Spleen (tissue), 13 donors: ENCODE measurements at regions of chr5 and their contacts with region 1.

Region 1: DNA sequence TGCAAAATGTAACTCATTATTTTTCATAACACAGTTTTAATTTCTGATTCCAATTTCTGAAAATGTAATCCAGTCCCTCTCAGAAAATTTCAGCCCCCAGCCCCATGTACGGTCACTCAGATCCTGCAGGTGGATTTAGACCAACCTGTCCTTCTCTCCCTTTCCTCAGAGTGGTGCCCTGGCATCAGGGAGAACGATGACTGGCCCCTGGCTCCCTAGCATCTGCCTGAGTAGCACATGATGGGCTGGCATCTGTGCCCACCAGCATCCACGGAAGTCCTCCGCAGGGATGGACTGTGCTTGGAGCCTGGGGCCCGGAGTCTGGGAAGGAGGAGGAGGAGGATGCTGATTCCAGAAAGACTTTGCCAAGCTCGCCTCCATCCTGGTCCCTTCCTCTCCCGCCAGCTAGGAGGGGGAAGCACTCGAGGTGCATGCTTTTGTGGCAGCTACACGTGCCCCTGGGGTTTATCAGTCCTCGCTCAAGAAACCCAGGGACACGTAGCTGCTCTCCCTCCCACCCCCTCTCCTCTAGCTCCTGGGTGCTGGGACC is 54.4 kb upstream of the RUFY1 start:
- DNase-seq: no peak
- H3K4me3 ChIP-seq: no peak overlapping the region
- H3K27ac ChIP-seq: no peak overlapping the region
- H3K4me1 ChIP-seq: peaks cover 0 to 8% (median 2%) of the 10 kb centered on the region in 6 donors
- H3K27me3 ChIP-seq: no peaks in the 10 kb centered on the region
- CTCF ChIP-seq: no peak
- POLR2A ChIP-seq: no peak

Region 2: DNA sequence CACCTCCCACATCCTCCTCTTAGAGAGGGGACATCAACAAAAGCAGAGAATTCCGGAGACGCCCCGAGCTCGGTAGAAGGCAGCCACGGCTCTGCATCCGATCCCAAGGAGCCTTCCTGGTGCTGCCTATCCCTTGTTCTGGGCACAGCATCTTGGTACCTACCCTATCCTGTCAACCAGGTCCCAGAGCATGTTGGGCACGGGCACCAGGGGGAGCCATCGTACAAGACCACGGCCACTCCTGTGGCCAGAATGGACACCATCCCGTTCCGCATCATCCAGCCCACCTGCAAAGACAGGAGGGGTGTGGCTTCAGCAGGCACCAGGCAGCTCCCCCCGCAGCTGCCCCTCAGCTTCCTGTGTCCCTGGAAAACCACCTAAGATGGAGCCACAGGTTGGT is 702.8 kb before region 1 on chr5:
- intact Hi-C with region 1: loop called (anchors 10 kb)
- DNase-seq: no peak
- H3K4me3 ChIP-seq: no peak overlapping the region
- H3K27ac ChIP-seq: no peak overlapping the region
- H3K4me1 ChIP-seq: no peaks in the 10 kb centered on the region
- H3K27me3 ChIP-seq: peaks cover 0 to 16% (median 0%) of the 10 kb centered on the region in 7 donors
- CTCF ChIP-seq: peak in 6 of 11 experiments; percentile 34 to 60 (median 42)
- POLR2A ChIP-seq: no peak

Region 3: GRCh38 chr5:179166886-179167841 is 328.8 kb before region 1 on chr5:
- intact Hi-C with region 1: loop called (anchors 2 kb)
- DNase-seq: peak; percentile 87
- H3K4me3 ChIP-seq: peak overlapping the region in 7 of 8 donors; percentile 4 to 64 (median 21)
- H3K27ac ChIP-seq: peak overlapping the region in 1 of 8 donors; percentile 17
- H3K4me1 ChIP-seq: peaks cover 4 to 21% (median 14%) of the 10 kb centered on the region in 6 donors
- H3K27me3 ChIP-seq: peaks cover 0 to 22% (median 0%) of the 10 kb centered on the region in 7 donors
- CTCF ChIP-seq: peak; percentile 21 to 98 (median 87)
- POLR2A ChIP-seq: no peak